ENCODE measurements at regions of chr7 and their contacts with region 1.

Region 1: DNA sequence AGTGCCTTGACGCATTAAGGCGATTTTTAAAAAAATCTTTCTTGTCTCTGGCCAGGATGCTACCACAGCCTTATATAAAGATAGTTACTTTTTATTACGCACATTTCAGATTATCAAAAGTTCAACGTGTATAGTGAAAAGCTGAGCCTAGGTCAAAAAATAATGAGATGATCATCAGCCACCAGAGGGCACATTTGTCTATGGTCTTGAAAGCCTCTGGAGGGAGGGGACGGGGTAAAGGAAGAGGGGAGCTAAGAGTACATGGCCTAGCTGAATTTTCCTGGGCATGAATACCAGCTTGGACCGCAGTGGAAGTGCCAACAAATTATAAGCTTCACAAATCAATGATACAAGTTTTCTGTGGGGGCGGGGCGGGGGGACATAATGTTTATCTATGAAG is 285.9 kb upstream of the SMIM30 start:
- DNase-seq: no peak
- H3K4me3 Mint-ChIP-seq: no peak overlapping the region
- H3K27ac Mint-ChIP-seq: no peak overlapping the region
- H3K4me1 Mint-ChIP-seq: no peaks in the 10 kb centered on the region
- H3K27me3 Mint-ChIP-seq: peaks cover 8% of the 10 kb centered on the region

Region 2: DNA sequence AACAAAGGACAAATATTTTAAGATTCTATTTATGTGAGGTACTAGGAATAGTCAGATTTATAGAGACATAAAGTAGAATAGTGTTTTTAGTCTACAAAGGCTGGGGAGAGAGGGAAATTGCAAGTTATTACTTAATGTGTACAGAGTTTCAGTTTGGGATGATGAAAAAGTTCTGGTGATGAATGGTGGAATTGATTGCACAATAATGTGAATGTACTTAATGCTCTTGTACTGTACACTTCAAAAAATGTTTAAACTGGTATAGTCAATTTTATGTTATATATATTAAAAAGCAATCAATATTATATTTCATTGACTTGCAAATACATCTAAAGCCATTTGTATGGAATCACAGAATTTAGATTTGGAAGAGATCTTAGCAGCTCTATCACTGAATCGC is 301.2 kb after region 1 on chr7:
- CTCF ChIA-PET with region 1: no interaction called
- POLR2A ChIA-PET with region 1: no interaction called
- intact Hi-C with region 1: loop called (anchors 10 kb)
- DNase-seq: no peak
- H3K4me3 Mint-ChIP-seq: no peak overlapping the region
- H3K27ac Mint-ChIP-seq: no peak overlapping the region
- H3K4me1 Mint-ChIP-seq: no peaks in the 10 kb centered on the region
- H3K27me3 Mint-ChIP-seq: peaks cover 4% of the 10 kb centered on the region

Measured in activated CD4-positive, alpha-beta memory T cell treated with anti-CD3 and anti-CD28 coated beads for 36 hours (primary cell).